Activated CD4-positive, alpha-beta T cell treated with anti-CD3 and anti-CD28 coated beads, Interleukin-2, amount 10 ng/mL, durations not matched to agents 24 days and 14 days (primary cell): ENCODE measurements at regions of chr9 and their contacts with region 1.

Region 1: DNA sequence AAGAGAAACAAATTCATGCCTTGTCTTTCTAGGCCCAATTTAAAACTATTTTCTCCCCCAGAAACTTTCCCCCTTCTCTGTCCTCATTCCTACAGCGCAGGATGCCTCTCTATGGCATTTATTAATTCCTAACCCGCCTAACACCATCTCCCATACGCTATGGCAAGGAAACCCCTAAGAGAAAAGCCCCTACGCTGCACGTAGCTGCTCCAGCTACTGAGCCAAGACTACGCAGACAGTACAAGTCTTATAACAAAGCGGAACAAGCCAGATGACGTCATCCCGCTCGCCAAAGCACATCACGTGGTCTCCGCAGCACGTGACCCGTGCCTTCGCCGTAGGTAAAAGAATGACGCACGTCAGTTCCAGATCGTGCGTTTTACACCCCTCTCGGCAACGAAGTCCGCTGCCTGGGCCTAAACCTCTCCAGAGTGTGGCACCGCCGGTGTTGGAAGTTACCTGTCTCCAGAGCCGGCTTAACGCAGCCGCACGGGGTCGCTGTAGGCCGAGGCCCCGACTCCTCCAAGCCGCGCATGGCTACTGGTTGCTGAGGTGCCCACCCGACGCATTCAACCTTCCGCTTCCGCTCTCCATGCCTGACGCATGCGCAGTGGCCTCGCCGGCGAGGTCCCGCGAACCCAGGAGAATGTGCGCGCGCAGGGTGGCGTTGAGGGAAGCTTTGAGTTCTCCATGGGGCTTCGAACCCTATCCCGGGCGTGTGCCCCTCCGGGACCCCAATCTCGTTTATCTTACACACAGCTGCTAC is at the start of gene TRMO:
- DNase-seq: peak; percentile 99
- H3K4me3 Mint-ChIP-seq: peak within 1 kb of the TSS; percentile 93
- H3K27ac Mint-ChIP-seq: peak within 1 kb of the TSS; percentile 98
- H3K4me1 Mint-ChIP-seq: peaks cover 47% of the 10 kb centered on the region
- H3K27me3 Mint-ChIP-seq: peaks cover 2% of the 10 kb centered on the region
- total RNA-seq, gene TRMO: 9.8 and 13.0 TPM in 2 replicates

Region 2: GRCh38 chr9:97632985-97633858 is 288.9 kb before region 1 on chr9 and contains the starts of genes NCBP1 and TSTD2:
- intact Hi-C with region 1: loop called (anchors 1 kb)
- DNase-seq: peak; percentile 99
- H3K4me3 Mint-ChIP-seq: peak within 1 kb of the TSS; percentile 95
- H3K27ac Mint-ChIP-seq: peak within 1 kb of the TSS; percentile 99
- H3K4me1 Mint-ChIP-seq: peaks cover 40% of the 10 kb centered on the region
- H3K27me3 Mint-ChIP-seq: no peaks in the 10 kb centered on the region
- total RNA-seq, gene NCBP1: 48.9 and 51.4 TPM in 2 replicates
- total RNA-seq, gene TSTD2: 17.1 and 17.7 TPM in 2 replicates

Region 3: GRCh38 chr9:97906236-97906831 is 15.8 kb before region 1 on chr9:
- intact Hi-C with region 1: loop called (anchors 1 kb)
- DNase-seq: peak; percentile 81
- H3K4me3 Mint-ChIP-seq: peak overlapping the region; percentile 78
- H3K27ac Mint-ChIP-seq: peak overlapping the region; percentile 93
- H3K4me1 Mint-ChIP-seq: peaks cover 66% of the 10 kb centered on the region
- H3K27me3 Mint-ChIP-seq: no peaks in the 10 kb centered on the region

Region 4: GRCh38 chr9:98034593-98035546 is 112.7 kb after region 1 on chr9:
- intact Hi-C with region 1: loop called (anchors 1 kb)
- DNase-seq: peak; percentile 96
- H3K4me3 Mint-ChIP-seq: peak overlapping the region; percentile 22
- H3K27ac Mint-ChIP-seq: no peak overlapping the region
- H3K4me1 Mint-ChIP-seq: peaks cover 15% of the 10 kb centered on the region
- H3K27me3 Mint-ChIP-seq: no peaks in the 10 kb centered on the region

Region 5: GRCh38 chr9:98101868-98102273 is 179.7 kb after region 1 on chr9:
- intact Hi-C with region 1: loop called (anchors 5 kb)
- DNase-seq: peak; percentile 95
- H3K4me3 Mint-ChIP-seq: peak overlapping the region; percentile 80
- H3K27ac Mint-ChIP-seq: peak overlapping the region; percentile 93
- H3K4me1 Mint-ChIP-seq: peaks cover 73% of the 10 kb centered on the region
- H3K27me3 Mint-ChIP-seq: no peaks in the 10 kb centered on the region

Region 6: DNA sequence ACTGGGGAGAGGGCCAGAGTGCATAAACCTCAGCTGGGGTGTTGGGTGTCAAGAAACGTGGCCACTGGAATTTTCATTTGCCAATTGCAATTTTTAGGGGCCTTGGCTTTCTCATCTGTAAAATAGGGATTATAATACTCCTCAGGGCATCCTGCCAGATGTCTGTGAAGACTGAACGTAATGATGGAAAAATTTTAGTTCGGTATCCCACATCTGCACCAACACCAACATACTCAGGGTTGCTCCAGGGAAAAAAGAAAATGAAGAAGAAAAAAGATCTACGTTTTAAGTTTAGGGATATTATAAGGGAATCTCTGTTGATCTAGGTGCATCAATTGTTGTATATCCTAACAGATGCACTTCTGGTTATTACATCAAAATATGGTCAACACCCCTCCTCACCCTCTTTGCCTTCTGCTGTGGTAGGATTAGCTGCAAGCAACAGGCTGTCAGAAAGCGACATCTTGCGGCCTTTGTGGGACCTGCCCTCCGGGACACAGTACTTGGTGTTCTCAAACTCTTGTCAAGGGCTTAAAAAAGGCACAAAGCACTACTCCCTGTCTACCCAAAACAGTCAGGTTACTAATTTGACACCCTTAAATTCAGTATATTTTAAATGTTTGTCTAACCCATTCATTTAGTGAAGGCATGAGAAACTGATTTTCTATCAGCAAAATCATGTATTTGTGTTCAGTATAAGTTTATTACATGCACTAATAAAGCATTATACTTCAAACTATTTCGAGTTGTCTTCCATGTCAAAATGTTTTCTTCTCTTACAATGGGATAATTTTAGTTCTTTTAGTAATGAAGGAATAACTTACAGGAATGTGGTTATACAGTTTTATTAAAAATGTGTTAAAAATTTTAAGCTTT is 341.6 kb after region 1 on chr9:
- intact Hi-C with region 1: loop called (anchors 1 kb)
- DNase-seq: peak; percentile 95
- H3K4me3 Mint-ChIP-seq: no peak overlapping the region
- H3K27ac Mint-ChIP-seq: no peak overlapping the region
- H3K4me1 Mint-ChIP-seq: peaks cover 2% of the 10 kb centered on the region
- H3K27me3 Mint-ChIP-seq: peaks cover 23% of the 10 kb centered on the region